Activated CD8-positive, alpha-beta T cell treated with anti-CD3 and anti-CD28 coated beads, Interleukin-2, amount 10 ng/mL, durations not matched to agents 7 days and 5 days (primary cell): ENCODE measurements at regions of chr6 and their contacts with region 1.

Region 1: GRCh38 chr6:159042003-159042825 is 2.6 kb downstream of the TAGAP start:
- DNase-seq: peak; percentile 88
- ATAC-seq: peak; percentile 51
- H3K4me3 Mint-ChIP-seq: peak overlapping the region; percentile 100
- H3K27ac Mint-ChIP-seq: peak overlapping the region; percentile 99
- H3K4me1 Mint-ChIP-seq: peaks cover 67% of the 10 kb centered on the region
- H3K27me3 Mint-ChIP-seq: no peaks in the 10 kb centered on the region

Region 2: GRCh38 chr6:158999666-159000403 is 42.4 kb before region 1 on chr6 and contains the start of gene RSPH3:
- CTCF ChIA-PET with region 1: interaction called, 132 read pairs
- POLR2A ChIA-PET with region 1: interaction called, 7 read pairs
- DNase-seq: peak; percentile 93
- ATAC-seq: peak; percentile 94
- H3K4me3 Mint-ChIP-seq: peak within 1 kb of the TSS; percentile 89
- H3K27ac Mint-ChIP-seq: peak within 1 kb of the TSS; percentile 81
- H3K4me1 Mint-ChIP-seq: peaks cover 35% of the 10 kb centered on the region
- H3K27me3 Mint-ChIP-seq: no peaks in the 10 kb centered on the region
- total RNA-seq, gene RSPH3: 1.4 TPM

Region 3: GRCh38 chr6:159017757-159018559 is 24.3 kb before region 1 on chr6:
- CTCF ChIA-PET with region 1: interaction called, 17 read pairs
- POLR2A ChIA-PET with region 1: interaction called, 19 read pairs
- DNase-seq: peak; percentile 12
- ATAC-seq: peak; percentile 71
- H3K4me3 Mint-ChIP-seq: no peak overlapping the region
- H3K27ac Mint-ChIP-seq: peak overlapping the region; percentile 52
- H3K4me1 Mint-ChIP-seq: peaks cover 29% of the 10 kb centered on the region
- H3K27me3 Mint-ChIP-seq: no peaks in the 10 kb centered on the region

Region 4: GRCh38 chr6:159062564-159062945 is 20.3 kb after region 1 on chr6:
- CTCF ChIA-PET with region 1: interaction called, 94 read pairs
- POLR2A ChIA-PET with region 1: interaction called, 159 read pairs
- DNase-seq: peak; percentile 87
- ATAC-seq: peak; percentile 90
- H3K4me3 Mint-ChIP-seq: peak overlapping the region; percentile 55
- H3K27ac Mint-ChIP-seq: peak overlapping the region; percentile 95
- H3K4me1 Mint-ChIP-seq: peaks cover 86% of the 10 kb centered on the region
- H3K27me3 Mint-ChIP-seq: no peaks in the 10 kb centered on the region

Region 5: DNA sequence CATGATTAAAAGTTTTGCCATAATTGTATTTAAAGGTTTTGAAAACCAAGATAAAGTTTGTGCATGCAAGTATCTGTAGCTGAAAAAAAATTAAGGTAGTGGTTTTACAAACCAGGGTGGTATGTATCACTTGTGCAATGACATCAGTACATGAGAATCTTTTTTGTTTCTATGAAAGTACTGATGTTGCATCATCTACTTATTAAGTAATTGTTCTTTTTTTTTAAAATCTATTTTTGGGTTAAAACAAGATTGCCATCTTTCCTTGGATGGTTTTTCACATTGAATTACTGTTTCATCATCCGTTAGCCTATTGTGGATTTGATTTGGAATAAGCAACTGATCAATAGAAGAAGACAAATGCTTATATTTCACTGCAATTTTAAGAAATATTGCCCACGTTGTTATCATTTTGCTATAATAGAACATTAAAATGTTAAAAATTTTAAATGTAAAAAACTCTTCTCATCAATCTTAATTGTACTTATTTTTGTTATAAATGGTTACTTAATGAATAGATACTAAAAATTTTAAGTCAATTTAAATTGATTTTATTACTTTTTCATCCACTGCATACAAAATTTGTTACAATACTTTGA is 42.4 kb after region 1 on chr6:
- CTCF ChIA-PET with region 1: interaction called, 24 read pairs
- POLR2A ChIA-PET with region 1: interaction called, 38 read pairs
- DNase-seq: no peak
- ATAC-seq: no peak
- H3K4me3 Mint-ChIP-seq: no peak overlapping the region
- H3K27ac Mint-ChIP-seq: no peak overlapping the region
- H3K4me1 Mint-ChIP-seq: peaks cover 25% of the 10 kb centered on the region
- H3K27me3 Mint-ChIP-seq: no peaks in the 10 kb centered on the region

Region 6: DNA sequence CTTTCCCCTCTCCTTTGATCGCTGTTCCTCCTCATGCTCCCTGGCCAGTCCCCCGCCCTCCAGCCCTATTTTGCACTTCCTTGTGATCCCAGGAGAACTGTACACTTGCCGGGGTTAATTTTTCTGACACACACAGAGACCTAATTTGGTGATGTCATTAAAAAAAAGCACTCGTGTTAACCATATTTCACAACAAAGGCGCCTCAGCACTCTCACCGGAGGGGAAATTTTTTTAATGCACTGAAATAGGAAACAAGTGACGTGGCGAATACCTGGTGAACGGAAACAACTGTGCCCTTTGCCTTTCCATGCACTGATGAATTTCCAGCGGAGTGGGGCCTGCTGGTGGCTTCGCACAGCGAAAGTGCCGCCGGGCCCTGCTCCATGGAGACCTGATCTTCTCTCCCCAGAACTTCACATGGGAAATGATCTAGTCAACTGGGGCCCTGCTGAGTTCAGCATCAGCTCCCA is 56.5 kb after region 1 on chr6:
- CTCF ChIA-PET with region 1: interaction called, 426 read pairs
- POLR2A ChIA-PET with region 1: interaction called, 361 read pairs
- DNase-seq: peak; percentile 71
- ATAC-seq: peak; percentile 57
- H3K4me3 Mint-ChIP-seq: peak overlapping the region; percentile 58
- H3K27ac Mint-ChIP-seq: peak overlapping the region; percentile 90
- H3K4me1 Mint-ChIP-seq: peaks cover 76% of the 10 kb centered on the region
- H3K27me3 Mint-ChIP-seq: no peaks in the 10 kb centered on the region

Region 7: GRCh38 chr6:159134701-159135364 is 92.6 kb after region 1 on chr6:
- CTCF ChIA-PET with region 1: interaction called, 39 read pairs
- POLR2A ChIA-PET with region 1: no interaction called
- DNase-seq: peak; percentile 82
- ATAC-seq: peak; percentile 87
- H3K4me3 Mint-ChIP-seq: no peak overlapping the region
- H3K27ac Mint-ChIP-seq: no peak overlapping the region
- H3K4me1 Mint-ChIP-seq: peaks cover 5% of the 10 kb centered on the region
- H3K27me3 Mint-ChIP-seq: peaks cover 18% of the 10 kb centered on the region

Region 8: DNA sequence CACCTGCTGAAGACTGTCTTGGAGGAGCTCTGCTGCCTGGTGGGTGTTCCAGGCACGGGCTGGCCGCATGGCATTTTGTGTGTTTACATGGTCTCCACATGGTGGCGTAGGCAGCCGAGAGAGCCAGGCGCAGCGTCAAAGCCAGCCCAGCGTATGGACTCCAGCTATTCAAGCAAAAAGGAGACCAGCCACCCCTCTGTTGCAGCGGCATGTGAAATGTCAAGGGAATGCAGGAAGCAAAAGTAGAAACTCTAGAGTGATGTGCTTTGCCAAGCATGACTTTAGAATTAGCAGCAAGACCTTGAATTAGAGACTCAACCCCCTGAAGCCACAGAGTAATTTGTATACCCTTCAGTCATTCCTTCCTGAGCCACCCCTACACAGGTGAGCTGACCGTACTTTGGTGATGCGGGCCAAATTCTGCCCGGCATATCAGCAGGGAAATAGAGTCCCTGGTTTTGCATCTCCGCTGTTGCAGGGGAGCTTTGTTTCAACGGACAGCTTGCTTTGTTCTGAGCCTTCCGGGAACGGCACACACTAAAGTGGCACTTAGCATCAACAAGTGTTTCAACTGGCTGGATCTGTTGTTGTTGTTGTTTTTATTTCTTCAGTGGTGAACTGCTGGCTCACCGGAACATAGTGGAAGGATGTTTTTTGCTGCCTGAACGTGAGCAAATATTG is 175.5 kb after region 1 on chr6:
- CTCF ChIA-PET with region 1: no interaction called
- POLR2A ChIA-PET with region 1: no interaction called
- DNase-seq: peak; percentile 30
- ATAC-seq: peak; percentile 57
- H3K4me3 Mint-ChIP-seq: no peak overlapping the region
- H3K27ac Mint-ChIP-seq: no peak overlapping the region
- H3K4me1 Mint-ChIP-seq: peaks cover 3% of the 10 kb centered on the region
- H3K27me3 Mint-ChIP-seq: peaks cover 21% of the 10 kb centered on the region

Region 9: GRCh38 chr6:159440911-159441703 is 398.9 kb after region 1 on chr6:
- CTCF ChIA-PET with region 1: no interaction called
- POLR2A ChIA-PET with region 1: no interaction called
- DNase-seq: no peak
- ATAC-seq: no peak
- H3K4me3 Mint-ChIP-seq: no peak overlapping the region
- H3K27ac Mint-ChIP-seq: no peak overlapping the region
- H3K4me1 Mint-ChIP-seq: no peaks in the 10 kb centered on the region
- H3K27me3 Mint-ChIP-seq: peaks cover 4% of the 10 kb centered on the region